Calu3 (cell line): ENCODE measurements at regions of chr9 and their contacts with region 1.

Region 1: GRCh38 chr9:71479621-71480020 is 288.7 kb downstream of the CEMIP2 start:
- DNase-seq: no peak
- H3K4me3 Mint-ChIP-seq: no peak overlapping the region
- H3K27ac Mint-ChIP-seq: no peak overlapping the region
- H3K4me1 Mint-ChIP-seq: no peaks in the 10 kb centered on the region
- H3K27me3 Mint-ChIP-seq: peaks cover 2% of the 10 kb centered on the region
- CTCF ChIP-seq: no peak

Region 2: DNA sequence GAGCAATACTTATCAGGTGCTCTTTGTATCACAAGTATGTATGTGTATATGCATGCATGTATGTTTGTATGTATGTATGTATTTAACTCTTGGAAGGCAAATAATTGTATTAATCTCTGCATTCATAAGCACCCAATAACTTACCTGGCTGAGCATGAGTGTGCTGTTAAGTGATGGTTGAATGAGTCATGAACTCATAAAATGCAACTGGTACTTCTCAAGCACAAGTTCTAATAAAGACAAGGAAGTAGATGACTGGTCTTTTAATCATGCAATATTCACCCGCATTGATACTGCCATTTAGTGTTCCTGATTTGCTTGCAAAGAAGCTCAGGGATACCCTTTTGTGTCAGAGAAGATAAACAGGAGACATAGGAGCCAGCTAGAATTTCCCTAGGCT is 153.3 kb before region 1 on chr9:
- CTCF ChIA-PET with region 1: no interaction called
- intact Hi-C with region 1: loop called (anchors 5 kb)
- DNase-seq: no peak
- H3K4me3 Mint-ChIP-seq: no peak overlapping the region
- H3K27ac Mint-ChIP-seq: no peak overlapping the region
- H3K4me1 Mint-ChIP-seq: no peaks in the 10 kb centered on the region
- H3K27me3 Mint-ChIP-seq: peaks cover 54% of the 10 kb centered on the region
- CTCF ChIP-seq: no peak